SK-N-SH (cell line): ENCODE measurements at regions of chr10 and their contacts with region 1.

Region 1: DNA sequence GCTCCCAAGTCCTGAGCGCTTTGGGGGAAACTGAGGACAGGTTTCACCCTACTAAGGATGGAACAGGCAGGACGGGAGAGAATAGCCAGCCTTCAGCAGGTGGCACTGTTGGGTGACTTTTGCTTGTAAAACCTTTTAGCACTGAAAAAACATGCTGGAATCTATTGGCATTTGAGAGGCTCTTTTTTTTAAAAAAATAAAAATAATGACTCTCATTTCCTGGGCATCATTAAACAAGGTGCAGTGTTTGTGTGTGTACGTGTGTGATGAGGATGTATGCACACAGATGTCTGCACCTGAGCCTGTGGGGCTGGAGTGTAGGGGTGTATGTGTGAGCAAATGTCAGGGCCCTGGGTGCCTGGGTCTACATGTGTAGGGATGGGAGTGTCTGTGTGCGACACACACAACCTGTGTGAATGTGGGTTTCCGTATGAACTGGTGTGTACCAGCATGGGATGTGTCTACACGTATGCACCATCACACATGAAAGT is 177.9 kb downstream of the RPS24 start:
- DNase-seq: peak; percentile 71
- H3K4me3 ChIP-seq: no peak overlapping the region
- H3K27ac ChIP-seq: peak overlapping the region in 1 of 2 experiments; percentile 87; a peak in 2 of 4 replicates
- H3K4me1 ChIP-seq: peaks cover 19 to 64% of the 10 kb centered on the region in 2 experiments; a peak in 3 of 4 replicates
- H3K27me3 ChIP-seq: no peaks in the 10 kb centered on the region
- CTCF ChIP-seq: peak; percentile 89
- EP300 ChIP-seq: no peak
- RAD21 ChIP-seq: peak; percentile 90

Region 2: DNA sequence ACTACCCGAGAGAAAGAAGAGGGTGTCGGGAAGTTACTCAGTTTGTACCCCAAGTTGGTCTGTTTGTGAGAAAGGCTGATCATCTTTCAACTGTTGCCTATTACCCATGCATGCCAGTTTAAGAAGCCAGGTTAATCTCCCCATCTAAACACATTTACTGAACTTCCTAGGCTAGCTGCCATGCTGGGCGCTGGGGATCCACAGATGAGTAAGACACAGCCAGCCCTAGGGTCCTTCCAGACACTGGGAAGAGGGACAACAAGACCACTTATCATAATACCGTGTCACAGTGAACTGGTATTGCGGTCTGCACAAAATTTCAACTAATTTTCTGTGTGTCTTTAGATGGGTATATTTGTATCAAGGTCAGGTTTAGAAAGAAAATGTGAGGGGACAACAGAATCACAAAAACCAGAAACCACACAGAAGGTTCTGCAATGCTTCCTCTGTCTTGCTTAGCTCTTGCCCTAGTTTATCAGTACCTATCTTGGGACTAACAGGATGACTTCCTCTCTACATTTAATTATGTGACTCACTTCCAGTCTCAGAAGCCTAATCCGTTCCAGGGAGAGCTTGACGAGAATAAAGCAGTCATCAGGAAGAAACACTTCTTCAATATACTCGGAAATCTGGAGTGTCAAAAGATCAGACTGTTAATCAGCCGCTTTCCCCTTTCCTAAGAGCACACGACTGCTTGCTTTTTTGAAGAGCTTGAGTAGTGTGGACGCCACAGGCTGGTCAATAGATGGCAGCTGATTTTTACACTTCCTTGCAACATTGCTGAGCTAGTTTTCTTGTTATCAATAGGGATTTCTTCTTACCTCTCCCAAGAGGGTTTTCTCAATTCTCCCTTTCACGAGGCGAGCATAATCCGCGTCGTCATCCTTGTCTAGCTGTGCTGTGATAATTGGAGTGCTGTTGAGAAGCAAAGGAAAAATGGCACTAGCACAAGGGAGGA is 227.9 kb before region 1 on chr10:
- CTCF ChIA-PET with region 1: no interaction called
- POLR2A ChIA-PET with region 1: no interaction called
- DNase-seq: peak; percentile 52
- H3K4me3 ChIP-seq: no peak overlapping the region
- H3K27ac ChIP-seq: peak overlapping the region; percentile 86 to 89
- H3K4me1 ChIP-seq: peaks cover 19 to 28% of the 10 kb centered on the region in 2 experiments; a peak in 3 of 4 replicates
- H3K27me3 ChIP-seq: no peaks in the 10 kb centered on the region
- CTCF ChIP-seq: no peak
- EP300 ChIP-seq: peak in 1 of 2 experiments; percentile 37; a peak in 1 of 4 replicates
- RAD21 ChIP-seq: peak; percentile 19

Region 3: DNA sequence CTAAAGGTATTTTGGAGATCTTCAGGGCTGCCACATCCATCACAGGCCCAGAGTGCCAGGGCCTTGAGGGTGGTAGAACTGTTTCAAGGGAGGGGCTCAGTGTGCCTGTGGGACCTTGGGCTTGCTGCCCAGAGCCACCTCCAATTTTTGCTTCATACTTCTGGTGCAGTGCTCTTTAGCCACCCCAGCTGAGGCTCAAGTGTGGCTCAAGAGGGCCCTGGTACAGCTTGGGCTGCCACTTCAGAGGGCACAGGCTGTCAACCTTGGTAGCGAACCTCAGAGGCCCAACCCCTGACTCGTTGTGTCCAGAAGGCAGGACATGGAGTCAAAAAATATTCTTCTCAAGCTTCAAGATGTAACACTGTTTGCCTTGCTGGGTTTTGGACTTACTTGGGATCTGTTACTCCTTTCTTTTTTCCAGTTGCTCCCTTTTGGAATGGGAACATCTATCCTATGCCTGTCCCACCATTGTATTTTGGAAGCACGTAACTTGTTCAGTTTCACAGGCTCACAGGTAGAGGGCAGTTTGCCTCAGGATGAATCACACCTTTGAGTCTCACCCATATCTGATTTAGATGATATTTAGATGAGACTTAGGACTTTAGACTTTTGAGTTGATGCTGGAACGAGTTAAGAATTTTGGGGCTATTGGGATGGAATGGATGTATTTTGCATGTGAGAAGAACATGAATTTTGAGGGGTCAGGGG is 46.9 kb after region 1 on chr10:
- CTCF ChIA-PET with region 1: interaction called, 12 read pairs
- POLR2A ChIA-PET with region 1: interaction called, 3 read pairs
- DNase-seq: no peak
- H3K4me3 ChIP-seq: no peak overlapping the region
- H3K27ac ChIP-seq: peak overlapping the region in 1 of 2 experiments; percentile 5; a peak in 1 of 4 replicates
- H3K4me1 ChIP-seq: peaks cover 38 to 46% of the 10 kb centered on the region in 2 experiments
- H3K27me3 ChIP-seq: no peaks in the 10 kb centered on the region
- CTCF ChIP-seq: no peak
- EP300 ChIP-seq: no peak
- RAD21 ChIP-seq: no peak

Region 4: GRCh38 chr10:78292982-78293865 is 81.6 kb after region 1 on chr10:
- CTCF ChIA-PET with region 1: interaction called, 10 read pairs
- POLR2A ChIA-PET with region 1: no interaction called
- DNase-seq: peak; percentile 69
- H3K4me3 ChIP-seq: no peak overlapping the region
- H3K27ac ChIP-seq: peak overlapping the region; percentile 17 to 99; a peak in 3 of 4 replicates
- H3K4me1 ChIP-seq: peaks cover 28 to 80% of the 10 kb centered on the region in 2 experiments
- H3K27me3 ChIP-seq: no peaks in the 10 kb centered on the region
- CTCF ChIP-seq: no peak
- EP300 ChIP-seq: peak; percentile 52 to 69; a peak in 3 of 4 replicates
- RAD21 ChIP-seq: peak; percentile 29

Region 5: DNA sequence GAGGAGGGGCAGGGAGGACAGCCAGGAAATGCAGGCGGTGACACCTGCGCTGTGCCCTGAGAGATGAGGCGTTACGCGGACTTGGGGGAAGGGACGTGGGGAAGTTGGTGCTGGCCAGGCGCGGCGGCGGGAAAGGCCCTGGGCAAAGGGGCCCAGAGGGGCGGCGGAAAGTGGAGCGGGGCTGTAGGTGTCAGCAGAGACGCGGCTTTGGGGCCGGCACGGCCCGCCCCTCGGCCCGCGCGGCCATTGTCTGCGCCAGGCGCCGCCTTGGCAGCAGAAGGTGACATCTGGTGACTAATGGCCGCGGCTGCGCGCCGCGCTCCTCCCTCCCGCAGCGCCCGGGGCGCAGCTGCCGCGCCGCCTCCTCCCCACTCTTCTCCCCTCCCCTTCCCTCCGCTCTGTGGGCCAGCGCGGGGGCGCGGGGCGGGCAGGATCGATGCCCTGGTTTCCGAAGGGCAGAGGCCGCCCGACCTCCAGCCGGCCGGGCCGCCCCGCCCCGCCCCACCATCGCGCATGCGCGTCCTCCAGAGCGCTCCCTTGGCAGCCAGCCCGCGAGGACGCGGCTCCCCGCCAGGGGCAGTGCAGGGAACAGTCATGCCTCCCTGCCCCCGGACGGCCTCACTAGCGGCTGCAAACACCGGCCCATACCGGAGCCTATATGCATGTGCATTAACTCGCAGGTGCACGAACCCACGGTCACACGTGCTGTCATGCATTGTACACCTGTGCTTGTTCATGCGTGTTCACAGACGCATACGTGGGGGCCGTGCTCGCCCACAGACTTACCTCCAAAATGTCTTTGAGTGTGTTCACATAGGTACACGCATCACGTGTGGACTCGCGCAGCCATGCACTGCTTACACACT is 91.6 kb after region 1 on chr10:
- CTCF ChIA-PET with region 1: interaction called, 67 read pairs
- POLR2A ChIA-PET with region 1: no interaction called
- DNase-seq: peak; percentile 99
- H3K4me3 ChIP-seq: peak overlapping the region; percentile 51 to 72
- H3K27ac ChIP-seq: peak overlapping the region; percentile 71 to 99
- H3K4me1 ChIP-seq: peaks cover 15 to 41% of the 10 kb centered on the region in 2 experiments; a peak in 3 of 4 replicates
- H3K27me3 ChIP-seq: no peaks in the 10 kb centered on the region
- CTCF ChIP-seq: peak; percentile 66
- EP300 ChIP-seq: peak; percentile 70 to 79; a peak in 3 of 4 replicates
- RAD21 ChIP-seq: peak; percentile 73

Region 6: GRCh38 chr10:78634389-78634815 is 422.8 kb after region 1 on chr10:
- CTCF ChIA-PET with region 1: no interaction called
- POLR2A ChIA-PET with region 1: no interaction called
- DNase-seq: peak; percentile 66
- H3K4me3 ChIP-seq: no peak overlapping the region
- H3K27ac ChIP-seq: peak overlapping the region; percentile 37 to 80; a peak in 3 of 4 replicates
- H3K4me1 ChIP-seq: peaks cover 8 to 28% of the 10 kb centered on the region in 2 experiments; a peak in 3 of 4 replicates
- H3K27me3 ChIP-seq: no peaks in the 10 kb centered on the region
- CTCF ChIP-seq: no peak
- EP300 ChIP-seq: peak in 1 of 2 experiments; percentile 58; a peak in 1 of 4 replicates
- RAD21 ChIP-seq: peak; percentile 35; the same call in 1 of the 2 replicates